Activated CD4-positive, alpha-beta memory T cell treated with anti-CD3 and anti-CD28 coated beads, Interleukin-2, amount 10 ng/mL, durations not matched to agents 7 days and 5 days (primary cell): ENCODE measurements at regions of chr1 and their contacts with region 1.

Region 1: DNA sequence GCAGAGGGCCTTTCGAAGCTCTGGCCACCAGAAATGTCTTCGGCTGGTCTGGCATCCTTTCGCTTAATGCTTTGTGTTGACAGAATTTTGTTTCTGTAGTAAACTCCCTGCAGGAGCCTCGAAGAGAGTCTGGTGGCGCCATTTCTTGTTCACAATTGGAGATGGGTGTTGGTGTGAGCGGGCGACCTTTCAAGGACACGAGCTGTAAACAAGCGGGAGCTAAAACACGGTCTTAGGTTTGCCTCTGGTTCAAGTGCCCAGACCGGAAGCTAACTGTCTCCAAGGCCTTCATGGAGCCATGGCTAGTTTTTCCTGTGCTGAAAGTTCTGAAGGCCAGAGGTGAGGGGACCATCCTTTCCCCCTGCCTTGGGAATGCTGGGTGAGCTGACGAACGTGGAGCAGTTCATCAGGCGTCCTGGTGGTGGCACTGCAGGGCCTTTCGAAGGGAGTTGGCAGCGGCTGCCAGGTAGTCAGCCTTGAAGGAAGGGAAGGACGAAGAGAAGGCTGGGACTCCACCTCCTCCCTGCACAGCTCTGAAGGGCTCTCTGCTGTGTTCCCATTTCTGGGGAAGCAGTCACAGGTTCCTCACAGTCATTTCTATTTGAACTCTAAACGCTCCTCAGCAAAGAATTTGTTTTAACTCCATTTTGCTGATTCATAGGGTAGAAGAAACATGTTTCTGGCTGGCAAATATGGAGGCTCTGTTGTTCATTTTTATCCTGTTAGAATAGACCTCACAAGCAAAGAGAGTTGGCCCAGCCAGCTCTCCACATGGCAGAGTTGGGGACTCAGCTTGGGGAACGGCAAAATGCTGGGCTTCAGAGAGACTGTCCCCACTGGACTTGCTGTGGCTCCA is 35.2 kb downstream of the URB2 start:
- DNase-seq: peak; percentile 67
- H3K4me3 Mint-ChIP-seq: no peak overlapping the region
- H3K27ac Mint-ChIP-seq: no peak overlapping the region
- H3K4me1 Mint-ChIP-seq: peaks cover 8% of the 10 kb centered on the region
- H3K27me3 Mint-ChIP-seq: no peaks in the 10 kb centered on the region

Region 2: GRCh38 chr1:229582011-229582694 is 79.1 kb before region 1 on chr1:
- CTCF ChIA-PET with region 1: no interaction called
- POLR2A ChIA-PET with region 1: no interaction called
- DNase-seq: no peak
- H3K4me3 Mint-ChIP-seq: no peak overlapping the region
- H3K27ac Mint-ChIP-seq: no peak overlapping the region
- H3K4me1 Mint-ChIP-seq: peaks cover 2% of the 10 kb centered on the region
- H3K27me3 Mint-ChIP-seq: peaks cover 7% of the 10 kb centered on the region

Region 3: GRCh38 chr1:229671310-229671709 is 10.1 kb after region 1 on chr1:
- CTCF ChIA-PET with region 1: interaction called, 11 read pairs
- POLR2A ChIA-PET with region 1: no interaction called
- DNase-seq: no peak
- H3K4me3 Mint-ChIP-seq: no peak overlapping the region
- H3K27ac Mint-ChIP-seq: no peak overlapping the region
- H3K4me1 Mint-ChIP-seq: no peaks in the 10 kb centered on the region
- H3K27me3 Mint-ChIP-seq: peaks cover 3% of the 10 kb centered on the region

Region 4: DNA sequence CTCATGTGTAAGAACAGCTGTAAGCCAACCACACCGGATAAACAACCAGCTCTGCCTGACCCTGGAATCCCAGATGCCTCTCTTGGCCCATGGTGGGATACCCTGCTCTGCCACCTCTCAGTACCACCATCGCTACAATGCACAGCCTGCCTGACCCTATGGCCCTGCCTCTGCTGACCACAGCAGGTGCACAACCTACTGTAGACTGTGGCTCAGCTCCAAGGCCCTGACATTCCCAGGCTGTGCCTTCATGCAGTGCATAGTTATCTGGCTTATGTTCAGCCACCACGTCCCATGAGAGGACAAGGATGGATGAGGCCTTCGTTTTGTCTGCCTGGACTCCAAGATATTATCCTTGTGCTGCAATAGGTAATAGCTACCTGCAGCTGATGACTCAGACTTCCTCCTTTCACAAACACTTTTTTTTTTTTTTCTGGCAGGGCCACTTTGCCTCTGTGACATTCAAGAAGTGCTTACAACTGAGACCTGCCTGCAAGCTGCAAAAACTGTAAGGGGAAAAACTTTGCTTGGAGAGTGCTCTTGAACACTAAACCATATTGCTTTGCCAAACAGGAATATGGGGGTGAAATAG is 142.5 kb after region 1 on chr1:
- CTCF ChIA-PET with region 1: no interaction called
- POLR2A ChIA-PET with region 1: no interaction called
- DNase-seq: no peak
- H3K4me3 Mint-ChIP-seq: no peak overlapping the region
- H3K27ac Mint-ChIP-seq: no peak overlapping the region
- H3K4me1 Mint-ChIP-seq: no peaks in the 10 kb centered on the region
- H3K27me3 Mint-ChIP-seq: no peaks in the 10 kb centered on the region

Region 5: DNA sequence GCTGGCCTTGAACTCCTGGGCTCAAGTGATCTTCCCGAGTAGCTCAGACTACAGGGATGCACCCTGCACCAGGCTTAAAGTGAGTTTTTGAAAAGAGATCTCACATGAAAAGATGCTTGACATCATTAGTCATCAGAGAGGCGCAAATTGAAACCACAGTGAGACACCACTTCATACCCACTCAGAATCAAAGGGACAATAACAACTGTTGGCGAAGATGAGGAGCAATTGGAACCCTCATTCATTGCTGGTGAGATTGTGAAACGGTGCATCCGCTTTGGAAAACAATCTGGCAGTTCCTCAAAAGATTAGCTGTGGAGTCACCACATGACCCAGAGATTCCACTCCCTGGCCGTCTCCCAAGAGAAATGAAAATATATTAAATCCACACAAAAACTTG is 642.6 kb after region 1 on chr1:
- CTCF ChIA-PET with region 1: interaction called, 10 read pairs
- POLR2A ChIA-PET with region 1: no interaction called
- DNase-seq: no peak
- H3K4me3 Mint-ChIP-seq: no peak overlapping the region
- H3K27ac Mint-ChIP-seq: no peak overlapping the region
- H3K4me1 Mint-ChIP-seq: peaks cover 20% of the 10 kb centered on the region
- H3K27me3 Mint-ChIP-seq: no peaks in the 10 kb centered on the region